Activated CD4-positive, alpha-beta T cell treated with anti-CD3 and anti-CD28 coated beads for 36 hours (primary cell): ENCODE measurements at regions of chr11 and their contacts with region 1.

Region 1: GRCh38 chr11:128733440-128734102 is 39.7 kb downstream of the FLI1 start:
- DNase-seq: peak; percentile 61
- ATAC-seq: peak; percentile 66
- H3K4me3 Mint-ChIP-seq: peak overlapping the region; percentile 59
- H3K27ac Mint-ChIP-seq: peak overlapping the region; percentile 78
- H3K4me1 Mint-ChIP-seq: peaks cover 99% of the 10 kb centered on the region
- H3K27me3 Mint-ChIP-seq: no peaks in the 10 kb centered on the region

Region 2: DNA sequence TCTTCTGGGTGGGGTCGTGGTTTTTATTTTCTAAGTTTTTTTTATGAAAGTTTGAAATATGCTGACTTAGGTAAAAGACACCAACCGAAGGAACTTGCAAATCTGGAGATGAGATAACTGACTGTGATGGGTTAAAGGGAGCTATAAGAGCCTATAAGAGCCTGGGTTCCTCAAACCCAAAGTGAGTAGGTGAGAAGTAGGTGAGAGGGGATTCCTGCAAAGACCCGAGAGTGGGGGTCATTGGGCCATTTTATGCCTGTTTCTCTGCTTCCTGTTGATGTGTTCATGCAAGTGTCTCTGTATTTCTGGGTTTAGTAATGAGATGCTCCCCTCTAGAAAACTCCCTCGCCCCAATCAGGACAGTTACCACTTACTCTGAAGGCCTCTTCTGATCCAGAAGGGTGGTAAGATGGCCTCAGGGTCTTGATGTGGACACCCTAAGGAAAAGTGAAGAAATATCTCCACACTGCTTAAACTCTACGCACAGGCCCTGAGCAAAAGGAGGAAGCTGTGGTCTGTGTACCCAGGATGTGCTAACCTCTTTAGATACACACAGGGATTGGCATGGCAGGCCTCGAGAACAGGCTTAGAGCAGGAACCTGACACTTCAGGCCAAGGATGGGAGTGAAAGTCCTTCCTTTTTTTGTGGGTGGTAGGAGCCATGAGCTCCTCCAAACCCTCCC is 37.9 kb before region 1 on chr11:
- CTCF ChIA-PET with region 1: interaction called, 4 read pairs
- POLR2A ChIA-PET with region 1: interaction called, 3 read pairs
- intact Hi-C with region 1: loop called (anchors 1 to 5 kb)
- DNase-seq: peak; percentile 49
- ATAC-seq: peak; percentile 24
- H3K4me3 Mint-ChIP-seq: peak overlapping the region; percentile 90
- H3K27ac Mint-ChIP-seq: peak overlapping the region; percentile 94
- H3K4me1 Mint-ChIP-seq: peaks cover 58% of the 10 kb centered on the region
- H3K27me3 Mint-ChIP-seq: peaks cover 9% of the 10 kb centered on the region

Region 3: DNA sequence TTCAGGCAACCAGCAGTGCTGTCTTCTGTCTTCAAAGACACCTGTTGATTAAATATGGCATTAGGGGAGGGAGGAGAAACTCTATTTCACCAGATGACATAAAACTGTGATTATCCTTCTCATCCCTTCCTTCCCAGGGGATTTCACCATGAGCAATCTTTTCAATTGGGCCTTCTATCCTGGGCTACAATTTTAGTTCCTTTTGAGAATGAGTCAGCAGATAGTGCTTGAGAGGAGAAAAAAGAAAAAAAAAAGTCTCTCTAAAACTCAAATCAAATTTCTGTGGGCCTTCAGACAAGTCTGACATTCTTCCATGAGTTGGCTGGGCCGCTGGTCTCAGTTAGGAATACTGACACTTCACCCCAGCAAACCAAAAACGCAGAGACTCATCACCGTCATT is 32.5 kb before region 1 on chr11:
- CTCF ChIA-PET with region 1: interaction called, 3 read pairs
- POLR2A ChIA-PET with region 1: interaction called, 3 read pairs
- intact Hi-C with region 1: loop called (anchors 2 to 5 kb)
- DNase-seq: no peak
- ATAC-seq: no peak
- H3K4me3 Mint-ChIP-seq: no peak overlapping the region
- H3K27ac Mint-ChIP-seq: peak overlapping the region; percentile 72
- H3K4me1 Mint-ChIP-seq: peaks cover 93% of the 10 kb centered on the region
- H3K27me3 Mint-ChIP-seq: no peaks in the 10 kb centered on the region

Region 4: DNA sequence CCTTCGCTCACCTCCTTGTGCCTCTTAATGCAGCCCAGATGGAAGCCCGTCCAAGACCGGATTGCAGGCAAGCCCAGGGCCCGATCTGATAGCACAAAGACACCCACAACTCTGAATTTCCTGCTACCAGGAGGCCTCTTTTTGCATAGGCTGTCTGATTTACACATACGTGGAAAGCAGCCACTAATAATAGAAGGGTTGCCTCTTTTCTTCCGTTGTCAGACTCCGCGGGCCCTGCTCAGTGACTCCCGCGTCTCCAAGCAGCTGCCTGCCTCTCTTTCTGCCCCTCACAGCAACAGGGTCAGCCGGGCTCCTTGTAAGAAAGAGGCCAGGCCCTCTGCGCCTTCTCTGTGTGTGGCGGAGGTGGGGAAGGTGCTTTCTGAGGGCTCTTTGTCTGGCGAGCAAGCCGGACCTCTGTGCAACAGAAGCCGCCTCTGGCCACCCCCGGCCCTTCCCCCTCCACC is 13.0 kb before region 1 on chr11:
- CTCF ChIA-PET with region 1: interaction called, 17 read pairs
- POLR2A ChIA-PET with region 1: interaction called, 4 read pairs
- intact Hi-C with region 1: loop called (anchors 1 to 2 kb)
- DNase-seq: peak; percentile 73
- ATAC-seq: peak; percentile 68
- H3K4me3 Mint-ChIP-seq: peak overlapping the region; percentile 69
- H3K27ac Mint-ChIP-seq: peak overlapping the region; percentile 96
- H3K4me1 Mint-ChIP-seq: peaks cover 98% of the 10 kb centered on the region
- H3K27me3 Mint-ChIP-seq: no peaks in the 10 kb centered on the region

Region 5: DNA sequence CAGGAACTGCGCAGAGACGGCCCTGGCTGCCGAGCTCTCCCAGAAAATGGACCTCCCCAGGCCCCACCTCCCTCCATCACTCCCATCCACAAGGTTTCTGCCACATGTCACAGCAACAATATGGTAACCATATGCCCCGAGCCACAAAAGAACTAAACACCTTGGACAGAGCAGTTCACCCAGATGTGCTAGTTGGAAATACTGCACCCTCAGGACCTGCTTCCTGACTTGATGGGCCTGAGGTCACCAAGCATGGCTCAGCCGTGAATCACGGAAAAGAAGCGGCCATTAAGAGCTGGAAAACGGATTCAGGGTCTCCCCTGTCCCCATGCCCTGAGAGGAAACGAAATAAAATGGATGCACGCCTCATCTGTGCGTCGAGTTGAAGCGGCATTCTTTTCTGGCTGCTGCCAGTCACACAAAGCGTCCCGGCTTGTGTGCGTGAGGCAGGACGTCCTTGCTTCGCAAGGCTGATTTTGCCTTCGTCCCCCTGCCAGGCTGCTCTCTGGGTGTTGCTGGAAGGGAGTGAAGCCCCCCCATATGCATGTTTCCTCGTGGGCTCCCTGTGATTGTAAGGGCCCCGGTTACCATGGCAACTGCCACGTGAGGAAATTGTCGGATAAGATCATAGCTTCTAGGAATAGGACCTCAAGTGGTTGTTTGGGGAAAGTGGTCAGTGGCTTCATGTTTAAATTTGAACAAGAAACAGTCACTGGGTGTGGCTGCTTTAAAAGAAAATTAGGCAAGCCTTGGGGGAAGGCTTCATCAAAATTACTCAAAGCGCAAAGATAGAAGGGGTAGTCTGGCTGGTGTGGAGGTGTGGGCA is 12.0 kb after region 1 on chr11:
- CTCF ChIA-PET with region 1: interaction called, 5 read pairs
- POLR2A ChIA-PET with region 1: no interaction called
- intact Hi-C with region 1: loop called in 1 of 2 experiments (anchors 1 kb)
- DNase-seq: no peak
- ATAC-seq: no peak
- H3K4me3 Mint-ChIP-seq: no peak overlapping the region
- H3K27ac Mint-ChIP-seq: no peak overlapping the region
- H3K4me1 Mint-ChIP-seq: peaks cover 65% of the 10 kb centered on the region
- H3K27me3 Mint-ChIP-seq: no peaks in the 10 kb centered on the region